Gastrocnemius medialis (tissue), 4 donors: ENCODE measurements at regions of chr3 and their contacts with region 1.

Region 1: GRCh38 chr3:28667646-28668621 is 319.3 kb upstream of the AZI2 start:
- DNase-seq: peak; percentile 53 to 79
- ATAC-seq: peak; percentile 92 to 96
- H3K4me3 ChIP-seq: peak overlapping the region; percentile 1 to 27 (median 18)
- H3K27ac ChIP-seq: peak overlapping the region; percentile 69 to 88 (median 76)
- H3K4me1 ChIP-seq: peaks cover 21 to 59% of the 10 kb centered on the region in 2 donors
- H3K27me3 ChIP-seq: no peaks in the 10 kb centered on the region
- CTCF ChIP-seq: peak; percentile 71 to 82 (median 76)
- POLR2A ChIP-seq: no peak

Region 2: DNA sequence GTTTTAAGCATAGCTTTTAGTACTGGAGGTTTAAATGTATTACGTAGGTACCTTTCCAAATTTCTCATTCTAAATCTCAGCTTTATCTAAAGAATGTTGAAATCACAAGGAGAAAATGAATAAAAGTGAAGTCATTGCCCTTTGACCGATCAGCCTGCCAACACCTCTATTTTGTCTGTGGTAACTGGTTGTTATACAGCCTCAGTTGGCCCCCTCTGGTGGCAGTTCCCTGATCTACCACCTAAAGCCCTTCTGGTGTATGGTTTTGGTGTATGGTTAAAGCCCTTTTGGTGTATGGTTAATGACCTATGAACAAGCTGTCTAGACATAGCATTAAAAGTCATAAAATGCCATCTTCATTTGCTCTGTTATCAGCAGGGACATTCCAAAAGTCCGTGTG is 58.9 kb after region 1 on chr3:
- in situ Hi-C with region 1: no loop called
- intact Hi-C with region 1: loop called (anchors 1 kb)
- DNase-seq: peak; percentile 12 to 50
- ATAC-seq: peak; percentile 74 to 78
- H3K4me3 ChIP-seq: no peak overlapping the region
- H3K27ac ChIP-seq: no peak overlapping the region
- H3K4me1 ChIP-seq: peaks cover 0 to 12% of the 10 kb centered on the region in 2 donors
- H3K27me3 ChIP-seq: no peaks in the 10 kb centered on the region
- CTCF ChIP-seq: peak; percentile 28 to 59 (median 48)
- POLR2A ChIP-seq: no peak

Region 3: GRCh38 chr3:28840976-28841376 is 173.0 kb after region 1 on chr3:
- in situ Hi-C with region 1: no loop called
- intact Hi-C with region 1: loop called (anchors 5 kb)
- DNase-seq: no peak
- ATAC-seq: no peak
- H3K4me3 ChIP-seq: no peak overlapping the region
- H3K27ac ChIP-seq: peak overlapping the region in 1 of 4 donors; percentile 52
- H3K4me1 ChIP-seq: peaks cover 15 to 21% of the 10 kb centered on the region in 2 donors
- H3K27me3 ChIP-seq: no peaks in the 10 kb centered on the region
- CTCF ChIP-seq: no peak
- POLR2A ChIP-seq: no peak